GM10248 (cell line): ENCODE measurements at regions of chr4 and their contacts with region 1.

Region 1: GRCh38 chr4:150242820-150243458 is 164.7 kb downstream of the DCLK2 start:
- DNase-seq: peak; percentile 53
- CTCF ChIP-seq: peak; percentile 84

Region 2: DNA sequence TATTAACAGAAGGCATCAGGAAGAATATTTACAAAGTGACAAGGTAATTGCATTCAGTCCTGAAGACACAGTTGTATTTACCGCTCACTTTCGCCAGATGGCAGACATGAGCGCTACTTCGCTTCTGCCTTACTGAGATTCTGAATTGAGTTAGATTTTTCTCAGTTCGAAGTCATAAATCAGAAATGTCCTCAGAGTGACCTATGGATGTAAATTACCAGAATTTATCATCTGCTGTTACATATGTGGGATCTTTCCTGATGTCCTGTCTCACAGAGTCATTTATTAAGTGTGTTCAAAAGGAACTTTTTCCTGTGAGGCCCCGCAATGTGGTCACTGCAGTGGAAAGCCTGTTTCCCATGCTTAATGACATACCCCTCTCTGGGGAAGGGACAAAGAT is 262.0 kb before region 1 on chr4:
- CTCF ChIA-PET with region 1: interaction called, 14 read pairs
- POLR2A ChIA-PET with region 1: no interaction called
- DNase-seq: peak; percentile 39
- CTCF ChIP-seq: peak; percentile 76

Region 3: DNA sequence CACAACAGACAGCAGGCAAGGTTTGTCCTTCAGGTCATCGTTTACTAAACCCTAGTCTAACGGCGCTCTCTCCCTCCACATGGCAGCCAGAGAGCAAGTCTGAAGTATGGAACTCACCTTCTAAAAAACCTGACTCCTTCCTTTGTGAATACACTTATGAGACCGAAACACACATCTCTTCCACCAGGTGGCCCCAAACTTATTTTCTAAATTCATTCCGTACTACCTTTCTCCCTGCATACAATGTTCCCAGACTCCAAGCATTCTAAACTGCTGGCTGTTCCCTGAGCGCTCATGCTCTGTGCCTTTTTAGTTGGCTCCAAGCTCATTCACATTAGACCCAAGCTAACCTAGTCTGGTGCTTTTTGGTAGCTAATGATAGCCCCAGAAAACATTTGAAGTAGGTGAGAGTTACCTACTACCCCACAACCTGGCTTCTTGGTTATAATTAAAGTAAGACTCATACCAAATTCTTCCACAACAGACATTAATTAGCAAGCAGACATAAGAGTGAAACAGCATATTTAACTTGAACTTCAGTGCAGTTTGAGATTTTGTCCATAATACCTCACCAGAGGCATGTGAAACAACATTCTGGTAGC is 232.3 kb before region 1 on chr4:
- CTCF ChIA-PET with region 1: interaction called, 11 read pairs
- POLR2A ChIA-PET with region 1: no interaction called
- DNase-seq: peak; percentile 15
- CTCF ChIP-seq: peak; percentile 36

Region 4: GRCh38 chr4:150229523-150229922 is 13.4 kb before region 1 on chr4:
- CTCF ChIA-PET with region 1: interaction called, 31 read pairs
- POLR2A ChIA-PET with region 1: no interaction called
- DNase-seq: no peak
- CTCF ChIP-seq: no peak

Region 5: DNA sequence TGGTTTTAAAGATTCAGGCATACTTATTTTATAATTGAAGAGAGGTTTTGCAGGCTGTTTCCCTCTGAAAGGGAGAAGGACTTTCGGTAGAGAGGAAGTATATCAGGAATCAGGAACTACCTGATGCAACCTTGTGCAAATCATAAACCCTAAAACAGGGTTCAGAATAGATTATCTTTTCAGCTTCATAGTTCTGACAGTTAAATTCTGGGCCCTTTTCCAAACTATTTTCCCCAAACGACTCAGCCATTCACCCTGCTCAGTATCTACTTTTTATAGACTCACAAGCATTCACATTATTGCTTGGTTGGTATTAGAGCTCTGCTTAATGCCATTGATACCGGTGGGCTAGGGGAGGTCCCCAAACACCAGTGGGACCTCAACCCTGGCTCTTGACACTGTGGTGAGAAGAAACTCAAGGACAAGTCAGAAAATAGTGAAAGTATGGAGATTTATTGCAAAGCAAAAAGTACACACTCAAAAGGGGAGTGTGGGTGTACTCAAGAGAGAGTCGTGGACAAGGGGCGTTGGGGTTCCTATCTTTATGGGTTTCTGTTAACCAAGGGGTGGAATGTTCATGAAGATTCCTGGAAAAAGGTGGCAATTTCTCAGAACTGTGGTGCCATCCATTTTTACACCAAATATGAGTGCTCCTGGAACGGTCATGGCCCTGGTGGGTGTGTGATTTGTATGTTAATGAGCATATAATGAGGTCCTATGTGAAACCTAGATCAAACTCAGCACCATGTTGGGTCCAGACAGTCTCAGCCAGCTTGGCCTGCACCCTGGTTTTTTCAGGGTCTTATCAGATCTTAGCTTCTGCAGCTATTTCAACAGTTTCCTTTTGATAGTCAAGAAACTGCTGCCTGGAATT is 73.6 kb after region 1 on chr4:
- CTCF ChIA-PET with region 1: no interaction called
- POLR2A ChIA-PET with region 1: no interaction called
- DNase-seq: no peak
- CTCF ChIP-seq: no peak

Region 6: DNA sequence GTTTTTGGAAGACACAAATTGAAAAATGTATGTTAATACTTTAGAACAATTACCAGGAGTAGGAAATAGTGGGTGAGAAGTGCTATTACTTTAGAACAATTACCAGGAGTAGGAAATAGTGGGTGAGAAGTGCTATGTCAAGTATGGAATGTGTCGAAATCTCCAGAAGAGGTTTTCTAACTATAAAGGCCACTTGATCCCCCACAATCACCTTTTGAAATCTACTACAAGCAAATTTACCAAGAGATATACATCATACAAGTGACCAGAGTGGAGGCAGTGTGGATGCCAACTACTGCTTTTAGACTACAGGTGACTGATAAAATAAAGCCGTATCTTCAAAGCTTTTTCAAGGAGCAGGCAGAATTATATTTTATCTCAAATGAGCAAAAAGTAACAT is 382.1 kb after region 1 on chr4:
- CTCF ChIA-PET with region 1: no interaction called
- POLR2A ChIA-PET with region 1: no interaction called
- DNase-seq: no peak
- CTCF ChIP-seq: no peak

Region 7: GRCh38 chr4:150867148-150867547 is 624.2 kb after region 1 on chr4:
- CTCF ChIA-PET with region 1: interaction called, 13 read pairs
- POLR2A ChIA-PET with region 1: no interaction called
- DNase-seq: peak; percentile 68
- CTCF ChIP-seq: peak; percentile 52